Naive thymus-derived CD4-positive, alpha-beta T cell (primary cell): ENCODE measurements at regions of chr7 and their contacts with region 1.

Region 1: DNA sequence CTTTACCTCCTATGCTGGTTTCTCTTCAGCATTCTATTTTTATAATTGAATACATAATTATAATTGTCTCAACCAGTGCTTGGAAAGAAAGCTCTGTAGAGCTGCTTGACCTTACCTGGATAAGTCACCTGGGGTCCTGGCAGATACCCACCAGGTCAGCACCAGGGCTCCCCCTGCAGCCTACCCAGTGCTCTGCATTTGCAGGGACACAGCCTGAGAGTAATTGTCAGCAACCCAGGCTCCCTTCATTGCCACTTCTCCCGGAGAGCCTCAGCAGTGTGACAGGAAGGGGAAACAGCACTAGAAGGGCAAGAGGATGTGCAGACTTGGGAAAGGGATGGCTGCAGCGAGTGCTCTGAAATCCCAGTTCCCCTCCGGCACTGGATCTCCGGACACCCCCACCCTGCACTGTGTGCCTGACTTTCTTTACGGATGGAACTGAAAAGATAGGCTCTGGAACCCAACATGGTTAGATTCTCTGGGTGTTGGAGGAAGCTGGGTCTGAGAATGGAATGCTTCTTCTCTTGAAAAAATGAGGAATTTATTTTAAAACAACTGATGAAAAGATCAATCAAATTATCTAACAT is 11.4 kb upstream of the PAX4 start:
- DNase-seq: peak in 6 of 9 donors; percentile 5 to 25 (median 18)
- ATAC-seq: peak; percentile 63
- H3K4me3 ChIP-seq: no peak overlapping the region
- H3K4me3 Mint-ChIP-seq: no peak overlapping the region
- H3K27ac ChIP-seq: no peak overlapping the region
- H3K27ac Mint-ChIP-seq: peak overlapping the region in 2 of 9 donors; percentile 31 to 87
- H3K4me1 ChIP-seq: no peaks in the 10 kb centered on the region
- H3K4me1 Mint-ChIP-seq: peaks cover 0 to 3% (median 0%) of the 10 kb centered on the region in 7 donors
- H3K27me3 ChIP-seq: no peaks in the 10 kb centered on the region
- H3K27me3 Mint-ChIP-seq: peaks cover 7 to 31% (median 14%) of the 10 kb centered on the region in 5 donors

Region 2: DNA sequence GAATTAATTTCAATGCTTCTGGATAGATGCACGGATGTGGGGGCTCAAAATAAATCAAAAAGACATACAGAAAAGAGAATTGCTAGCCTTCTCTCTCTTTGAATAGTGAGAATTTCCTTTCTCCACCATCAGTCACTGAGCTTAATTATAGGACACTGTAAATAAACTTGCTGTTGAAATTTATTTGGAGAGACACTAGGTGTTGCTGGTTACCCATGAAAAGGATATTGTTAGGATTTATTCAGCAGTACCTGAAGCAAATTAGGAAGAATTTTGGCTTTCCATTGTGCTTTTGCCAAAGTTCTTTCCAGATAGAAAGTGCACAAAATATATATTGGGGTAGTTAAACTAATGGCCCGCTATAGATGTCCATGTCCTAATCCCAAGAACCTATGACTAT is 71.6 kb before region 1 on chr7:
- CTCF ChIA-PET with region 1: no interaction called
- POLR2A ChIA-PET with region 1: no interaction called
- intact Hi-C with region 1: loop called in 1 of 2 experiments (anchors 2 kb)
- DNase-seq: no peak
- ATAC-seq: no peak
- H3K4me3 ChIP-seq: no peak overlapping the region
- H3K4me3 Mint-ChIP-seq: no peak overlapping the region
- H3K27ac ChIP-seq: no peak overlapping the region
- H3K27ac Mint-ChIP-seq: no peak overlapping the region
- H3K4me1 ChIP-seq: no peaks in the 10 kb centered on the region
- H3K4me1 Mint-ChIP-seq: peaks cover 0 to 5% (median 0%) of the 10 kb centered on the region in 7 donors
- H3K27me3 ChIP-seq: no peaks in the 10 kb centered on the region
- H3K27me3 Mint-ChIP-seq: peaks cover 0 to 7% (median 0%) of the 10 kb centered on the region in 5 donors

Region 3: GRCh38 chr7:127651556-127652332 is 22.4 kb after region 1 on chr7 and contains the start of gene SND1:
- CTCF ChIA-PET with region 1: no interaction called
- POLR2A ChIA-PET with region 1: no interaction called
- intact Hi-C with region 1: no loop called
- DNase-seq: peak; percentile 92 to 100 (median 98)
- ATAC-seq: peak; percentile 96
- H3K4me3 ChIP-seq: peak within 1 kb of the TSS; percentile 96
- H3K4me3 Mint-ChIP-seq: peak within 1 kb of the TSS in 6 of 10 donors; percentile 98 to 99 (median 98)
- H3K27ac ChIP-seq: peak within 1 kb of the TSS; percentile 86
- H3K27ac Mint-ChIP-seq: peak within 1 kb of the TSS in 5 of 9 donors; percentile 94 to 99 (median 98)
- H3K4me1 ChIP-seq: peaks cover 22 to 26% of the 10 kb centered on the region in 2 donors
- H3K4me1 Mint-ChIP-seq: peaks cover 5 to 55% (median 43%) of the 10 kb centered on the region in 7 donors
- H3K27me3 ChIP-seq: no peaks in the 10 kb centered on the region
- H3K27me3 Mint-ChIP-seq: peaks cover 0 to 4% (median 0%) of the 10 kb centered on the region in 5 donors
- total RNA-seq, gene SND1: 132 to 253 (median 163) TPM